Activated naive CD4-positive, alpha-beta T cell treated with anti-CD3 and anti-CD28 coated beads for 36 hours (primary cell): ENCODE measurements at regions of chr4 and their contacts with region 1.

Region 1: GRCh38 chr4:112636688-112637551 is at the starts of genes LARP7 and ZGRF1:
- DNase-seq: peak; percentile 99
- H3K4me3 Mint-ChIP-seq: no peak within 1 kb of the TSS
- H3K27ac Mint-ChIP-seq: peak within 1 kb of the TSS; percentile 16
- H3K4me1 Mint-ChIP-seq: peaks cover 27% of the 10 kb centered on the region
- H3K27me3 Mint-ChIP-seq: no peaks in the 10 kb centered on the region
- total RNA-seq, gene LARP7: 41.5 to 41.9 TPM
- total RNA-seq, gene ZGRF1: 40.0 to 43.0 TPM

Region 2: GRCh38 chr4:112145326-112145819 is 491.5 kb before region 1 on chr4 and contains the start of gene FAM241A:
- CTCF ChIA-PET with region 1: no interaction called
- intact Hi-C with region 1: loop called (anchors 1 kb)
- DNase-seq: peak; percentile 89
- H3K4me3 Mint-ChIP-seq: peak within 1 kb of the TSS; percentile 91
- H3K27ac Mint-ChIP-seq: peak within 1 kb of the TSS; percentile 93
- H3K4me1 Mint-ChIP-seq: peaks cover 30% of the 10 kb centered on the region
- H3K27me3 Mint-ChIP-seq: no peaks in the 10 kb centered on the region
- total RNA-seq, gene FAM241A: 2.2 to 2.5 TPM

Region 3: GRCh38 chr4:112327965-112328733 is 308.8 kb before region 1 on chr4:
- CTCF ChIA-PET with region 1: no interaction called
- intact Hi-C with region 1: loop called (anchors 10 kb)
- DNase-seq: no peak
- H3K4me3 Mint-ChIP-seq: no peak overlapping the region
- H3K27ac Mint-ChIP-seq: no peak overlapping the region
- H3K4me1 Mint-ChIP-seq: no peaks in the 10 kb centered on the region
- H3K27me3 Mint-ChIP-seq: no peaks in the 10 kb centered on the region

Region 4: GRCh38 chr4:112422644-112423043 is 214.3 kb before region 1 on chr4:
- CTCF ChIA-PET with region 1: no interaction called
- intact Hi-C with region 1: no loop called
- DNase-seq: no peak
- H3K4me3 Mint-ChIP-seq: no peak overlapping the region
- H3K27ac Mint-ChIP-seq: no peak overlapping the region
- H3K4me1 Mint-ChIP-seq: no peaks in the 10 kb centered on the region
- H3K27me3 Mint-ChIP-seq: no peaks in the 10 kb centered on the region

Region 5: DNA sequence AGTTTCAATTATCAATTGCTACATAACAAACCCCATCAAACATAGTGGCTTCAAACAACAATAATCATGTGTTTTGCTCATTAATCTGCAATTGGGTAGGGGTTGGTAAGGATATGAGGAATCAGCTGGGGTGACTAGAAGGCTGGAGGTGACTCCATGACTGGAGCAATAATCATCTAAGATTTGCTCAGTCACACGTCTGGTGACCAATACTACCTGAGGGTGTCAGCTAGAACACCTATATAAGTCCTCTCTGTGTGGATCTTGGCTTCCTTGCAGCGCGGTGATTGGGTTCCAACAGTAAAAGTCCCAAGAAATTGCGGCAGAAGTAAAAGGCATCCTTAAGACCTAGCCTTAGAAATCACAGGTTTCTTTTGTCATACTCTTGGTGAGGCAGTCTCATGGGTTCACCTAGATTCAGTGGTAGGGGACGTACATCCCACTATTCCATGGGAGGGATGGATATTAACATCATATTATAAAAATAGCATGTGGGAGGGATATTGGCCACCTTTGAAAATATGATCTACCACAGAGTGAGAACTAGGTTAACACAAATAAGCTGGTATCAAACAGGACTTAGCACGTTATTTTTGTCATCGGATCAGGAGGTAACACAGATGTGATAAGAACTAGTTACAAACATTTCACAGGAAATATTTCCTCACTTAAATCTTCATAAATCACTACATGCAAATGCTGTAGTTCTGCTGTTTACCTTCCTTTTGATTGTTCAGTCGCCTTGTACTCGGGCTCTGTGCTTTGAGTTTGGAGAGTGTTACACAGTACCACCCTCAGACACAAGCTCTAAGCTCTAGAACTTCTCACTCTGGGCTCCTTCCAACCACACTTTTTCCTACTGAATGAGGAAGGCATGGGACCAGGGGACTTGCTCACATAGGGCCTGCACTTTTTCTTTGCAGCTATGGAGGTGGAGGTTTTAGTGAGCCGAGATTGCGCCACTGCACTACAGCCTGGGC is 78.3 kb after region 1 on chr4:
- CTCF ChIA-PET with region 1: no interaction called
- intact Hi-C with region 1: no loop called
- DNase-seq: no peak
- H3K4me3 Mint-ChIP-seq: no peak overlapping the region
- H3K27ac Mint-ChIP-seq: no peak overlapping the region
- H3K4me1 Mint-ChIP-seq: no peaks in the 10 kb centered on the region
- H3K27me3 Mint-ChIP-seq: peaks cover 9% of the 10 kb centered on the region

Region 6: DNA sequence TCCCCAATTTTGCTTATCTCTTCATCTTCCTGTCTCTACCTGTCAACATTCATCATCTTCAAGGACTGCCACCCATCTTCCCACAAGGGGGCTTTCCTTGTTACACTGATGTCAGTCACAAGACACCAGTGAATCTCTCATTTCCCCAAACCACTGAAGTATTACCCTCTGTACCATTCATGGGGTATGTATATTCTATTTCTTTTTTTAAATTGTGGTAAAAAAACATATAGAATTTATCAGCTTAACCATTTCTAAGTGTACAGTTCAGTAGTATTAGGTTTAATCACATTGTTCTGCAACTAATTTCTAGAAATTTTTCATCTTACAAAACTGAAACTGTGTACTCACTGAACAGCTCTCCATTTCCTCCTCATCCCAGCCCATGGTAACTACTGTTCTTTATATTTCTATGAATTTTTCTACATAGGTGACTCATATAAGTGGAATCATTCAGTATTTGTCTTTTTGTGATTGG is 98.6 kb after region 1 on chr4:
- CTCF ChIA-PET with region 1: interaction called, 3 read pairs
- intact Hi-C with region 1: loop called (anchors 1 kb)
- DNase-seq: peak; percentile 21
- H3K4me3 Mint-ChIP-seq: no peak overlapping the region
- H3K27ac Mint-ChIP-seq: no peak overlapping the region
- H3K4me1 Mint-ChIP-seq: peaks cover 14% of the 10 kb centered on the region
- H3K27me3 Mint-ChIP-seq: no peaks in the 10 kb centered on the region

Region 7: DNA sequence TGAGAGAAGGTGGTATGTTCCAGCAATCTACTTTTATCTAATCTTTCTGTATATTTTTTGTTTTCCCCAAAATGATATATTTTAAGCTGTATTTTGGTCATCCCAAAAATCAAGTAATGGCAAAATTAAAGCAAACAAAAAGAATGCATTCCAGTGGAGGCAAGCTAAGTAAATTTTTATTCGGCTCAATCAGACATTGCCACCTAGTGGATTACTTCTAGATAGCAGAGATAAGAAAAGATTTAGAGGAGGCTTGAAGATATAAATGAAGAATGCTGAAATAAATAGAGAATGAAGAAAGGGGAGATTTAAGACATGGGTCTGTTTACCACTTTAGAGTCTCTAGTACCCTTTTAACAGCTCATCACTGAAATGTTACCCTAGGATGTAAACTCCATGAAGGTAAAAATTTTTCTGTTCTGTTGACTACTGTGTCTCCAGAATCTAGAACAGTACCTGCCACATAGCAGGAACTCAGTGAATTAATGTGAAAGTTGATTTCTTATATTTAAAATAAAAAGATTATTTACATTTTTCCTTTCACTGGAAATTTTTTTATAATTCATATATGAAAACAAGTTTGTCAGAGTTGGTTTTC is 301.6 kb after region 1 on chr4:
- CTCF ChIA-PET with region 1: no interaction called
- intact Hi-C with region 1: loop called (anchors 1 kb)
- DNase-seq: no peak
- H3K4me3 Mint-ChIP-seq: no peak overlapping the region
- H3K27ac Mint-ChIP-seq: no peak overlapping the region
- H3K4me1 Mint-ChIP-seq: no peaks in the 10 kb centered on the region
- H3K27me3 Mint-ChIP-seq: peaks cover 17% of the 10 kb centered on the region